ENCODE measurements at regions of chr18 and their contacts with region 1.

Region 1: DNA sequence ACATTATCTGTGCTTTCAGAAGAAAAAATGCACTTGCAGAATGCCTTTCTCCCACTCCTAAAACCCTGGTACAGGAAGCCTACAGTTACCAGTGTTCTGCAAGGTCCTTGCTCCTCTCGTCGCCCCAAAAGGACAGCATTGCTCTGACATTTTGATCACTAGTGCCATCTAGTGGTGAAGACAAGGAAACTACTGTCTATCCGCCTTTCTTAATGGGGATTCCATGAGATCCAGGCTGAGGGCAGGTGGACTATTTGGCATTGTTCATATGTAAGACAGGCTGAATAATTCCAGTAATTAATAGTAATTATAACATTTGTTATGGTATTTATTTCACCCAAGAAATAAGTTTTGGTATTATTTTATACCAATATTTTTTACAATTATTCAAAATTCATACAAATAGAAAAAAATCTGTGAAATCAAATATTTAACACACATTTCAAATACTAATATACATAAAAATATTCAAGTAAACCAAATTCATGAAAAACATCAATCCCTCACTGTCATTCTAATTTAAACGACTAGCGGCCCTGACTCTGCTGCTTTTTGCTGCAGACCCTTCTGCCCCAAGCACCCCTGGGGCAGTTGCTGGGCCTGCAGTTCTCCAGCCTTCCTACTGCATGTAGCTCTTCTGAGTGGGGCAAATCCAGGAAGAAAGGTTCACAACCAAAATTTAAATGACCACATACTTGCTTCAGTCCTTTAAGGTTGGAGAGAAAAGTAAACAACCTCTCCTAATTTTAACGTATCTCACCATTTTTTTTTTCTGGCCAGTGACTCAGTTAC is 19.0 kb downstream of the TPGS2 start:
- DNase-seq: peak; percentile 33
- ATAC-seq: peak; percentile 92
- H3K4me3 Mint-ChIP-seq: no peak overlapping the region
- H3K27ac Mint-ChIP-seq: no peak overlapping the region
- H3K4me1 Mint-ChIP-seq: peaks cover 11% of the 10 kb centered on the region
- H3K27me3 Mint-ChIP-seq: no peaks in the 10 kb centered on the region
- CTCF ChIP-seq: peak; percentile 82

Region 2: GRCh38 chr18:36688020-36688965 is 121.5 kb before region 1 on chr18:
- CTCF ChIA-PET with region 1: interaction called, 58 read pairs
- POLR2A ChIA-PET with region 1: no interaction called
- intact Hi-C with region 1: loop called (anchors 2 kb)
- DNase-seq: peak; percentile 74
- ATAC-seq: peak; percentile 53
- H3K4me3 Mint-ChIP-seq: no peak overlapping the region
- H3K27ac Mint-ChIP-seq: no peak overlapping the region
- H3K4me1 Mint-ChIP-seq: no peaks in the 10 kb centered on the region
- H3K27me3 Mint-ChIP-seq: peaks cover 9% of the 10 kb centered on the region
- CTCF ChIP-seq: peak; percentile 79

Region 3: GRCh38 chr18:36744261-36744876 is 65.4 kb before region 1 on chr18:
- CTCF ChIA-PET with region 1: no interaction called
- POLR2A ChIA-PET with region 1: no interaction called
- intact Hi-C with region 1: loop called (anchors 10 kb)
- DNase-seq: no peak
- ATAC-seq: no peak
- H3K4me3 Mint-ChIP-seq: no peak overlapping the region
- H3K27ac Mint-ChIP-seq: no peak overlapping the region
- H3K4me1 Mint-ChIP-seq: no peaks in the 10 kb centered on the region
- H3K27me3 Mint-ChIP-seq: peaks cover 10% of the 10 kb centered on the region
- CTCF ChIP-seq: no peak

Measured in activated CD8-positive, alpha-beta T cell treated with anti-CD3 and anti-CD28 coated beads for 36 hours (primary cell).